GM10248 (cell line): ENCODE measurements at regions of chr20 and their contacts with region 1.

Region 1: DNA sequence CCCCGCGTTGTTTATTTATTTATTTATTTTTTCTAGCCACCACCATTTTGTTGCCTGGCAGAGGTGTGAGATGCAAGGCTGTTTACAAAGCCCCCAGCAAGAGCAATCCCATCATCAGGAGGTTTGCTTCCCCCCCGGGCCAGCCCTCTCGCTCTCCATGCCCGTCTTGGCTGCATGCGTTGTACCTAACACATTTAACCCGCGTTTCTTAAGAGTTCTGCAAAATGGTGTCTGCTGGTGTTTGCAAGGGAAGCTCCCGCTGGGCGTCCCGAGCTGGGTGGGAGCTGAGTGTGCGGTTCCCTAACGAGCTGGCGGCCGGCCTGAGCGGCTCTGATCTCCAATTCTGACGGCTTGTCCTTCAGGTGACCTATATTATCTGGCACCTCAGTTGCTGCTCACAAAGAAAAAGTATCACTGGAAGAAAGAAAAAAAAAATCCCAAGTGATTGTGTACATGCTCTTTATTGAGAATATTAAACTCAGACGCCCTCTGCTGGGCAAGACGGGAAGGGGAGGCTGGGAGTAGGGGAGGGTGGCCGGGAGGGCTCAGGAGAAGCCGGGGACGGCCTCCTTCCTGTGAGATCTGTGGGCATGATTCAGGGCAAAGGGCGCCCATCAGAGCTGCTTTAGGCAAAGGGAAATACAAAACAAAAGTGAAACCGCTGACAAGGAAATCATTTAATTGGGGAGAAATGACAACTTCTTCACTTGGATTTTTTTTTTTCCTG is 154.8 kb downstream of the BCAS1 start:
- DNase-seq: peak; percentile 81
- CTCF ChIP-seq: peak; percentile 70

Region 2: DNA sequence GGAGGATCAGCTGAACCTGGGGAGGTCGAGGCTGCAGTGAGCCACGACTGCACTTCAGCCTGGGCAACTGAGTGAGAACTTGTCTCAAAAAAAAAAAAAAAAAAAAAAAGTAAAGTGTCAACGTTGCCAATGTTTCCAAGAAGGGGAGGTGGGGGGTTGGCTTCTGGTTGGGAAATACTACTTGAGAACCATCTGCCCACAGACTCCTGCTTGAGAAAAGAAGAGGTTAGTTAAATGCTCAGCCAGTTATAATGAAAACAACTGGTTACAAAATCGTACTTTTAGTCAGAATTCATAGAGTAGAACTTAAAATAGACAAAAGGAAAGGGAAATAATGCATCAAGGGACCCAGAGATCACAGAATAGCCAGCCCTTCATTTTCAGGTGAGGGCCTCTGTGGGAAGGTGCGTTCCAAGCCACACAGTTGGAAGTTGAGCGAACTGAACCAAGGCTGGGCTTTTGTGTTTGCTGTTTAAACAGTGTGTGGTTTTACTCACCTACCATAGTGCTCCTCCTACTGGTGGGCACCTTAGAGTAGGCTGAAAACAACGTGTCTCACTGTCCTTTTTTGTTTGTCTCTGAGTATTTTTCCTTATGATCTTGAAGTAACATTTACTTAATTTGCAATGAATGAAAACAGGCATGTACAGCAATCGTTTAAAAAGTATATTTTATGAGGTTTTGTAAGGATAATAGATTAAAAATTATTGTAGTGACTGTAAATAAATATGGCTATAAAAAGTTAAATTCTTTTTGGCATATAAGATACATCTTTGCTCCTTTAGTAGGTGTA is 45.9 kb before region 1 on chr20:
- CTCF ChIA-PET with region 1: interaction called, 20 read pairs
- POLR2A ChIA-PET with region 1: no interaction called
- DNase-seq: peak; percentile 52
- CTCF ChIP-seq: peak; percentile 77

Region 3: GRCh38 chr20:53884859-53885541 is 30.6 kb before region 1 on chr20:
- CTCF ChIA-PET with region 1: interaction called, 15 read pairs
- POLR2A ChIA-PET with region 1: no interaction called
- DNase-seq: no peak
- CTCF ChIP-seq: no peak

Region 4: GRCh38 chr20:53899351-53900167 is 16.1 kb before region 1 on chr20:
- CTCF ChIA-PET with region 1: interaction called, 72 read pairs
- POLR2A ChIA-PET with region 1: interaction called, 11 read pairs
- DNase-seq: peak; percentile 50
- CTCF ChIP-seq: no peak

Region 5: DNA sequence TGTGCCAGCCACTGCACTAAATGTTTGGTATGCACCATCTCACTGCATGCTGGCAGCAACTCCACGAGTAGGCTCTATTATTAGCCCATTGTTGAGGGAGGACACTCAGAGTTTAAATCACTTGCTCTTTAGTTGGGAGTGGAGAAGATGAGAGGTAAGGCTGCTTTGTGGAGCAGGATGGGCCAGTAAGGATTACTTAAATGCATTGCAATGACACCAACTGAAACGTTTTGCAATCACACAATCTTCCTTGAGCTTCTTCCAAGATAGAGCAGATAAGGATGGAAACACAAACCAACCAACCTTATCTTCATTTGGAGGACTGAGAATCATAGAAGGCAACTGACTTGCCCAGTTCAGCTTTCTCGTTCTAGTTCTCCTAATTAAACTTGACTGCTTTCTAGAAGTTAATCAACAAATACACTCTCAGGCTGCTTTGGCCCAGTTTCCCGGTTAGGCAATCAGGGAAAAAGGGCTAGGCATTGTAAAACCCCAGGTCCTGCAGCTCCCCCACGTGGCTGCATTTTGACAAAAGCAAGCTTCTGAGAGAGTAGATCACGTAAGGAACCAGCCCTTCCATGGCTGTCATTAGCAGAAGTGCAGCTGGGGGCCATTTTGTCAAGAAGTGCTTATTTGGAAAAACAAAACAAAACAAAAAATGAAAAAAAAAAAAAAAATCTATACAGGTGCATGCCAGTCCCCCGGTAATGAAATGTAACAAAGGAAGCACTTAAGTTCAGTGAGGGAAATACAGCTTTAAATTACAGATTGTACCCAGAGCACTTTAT is 24.2 kb after region 1 on chr20:
- CTCF ChIA-PET with region 1: interaction called, 281 read pairs
- POLR2A ChIA-PET with region 1: interaction called, 3 read pairs
- DNase-seq: peak; percentile 70
- CTCF ChIP-seq: peak; percentile 63